A673 (cell line): ENCODE measurements at regions of chr3 and their contacts with region 1.

Region 1: DNA sequence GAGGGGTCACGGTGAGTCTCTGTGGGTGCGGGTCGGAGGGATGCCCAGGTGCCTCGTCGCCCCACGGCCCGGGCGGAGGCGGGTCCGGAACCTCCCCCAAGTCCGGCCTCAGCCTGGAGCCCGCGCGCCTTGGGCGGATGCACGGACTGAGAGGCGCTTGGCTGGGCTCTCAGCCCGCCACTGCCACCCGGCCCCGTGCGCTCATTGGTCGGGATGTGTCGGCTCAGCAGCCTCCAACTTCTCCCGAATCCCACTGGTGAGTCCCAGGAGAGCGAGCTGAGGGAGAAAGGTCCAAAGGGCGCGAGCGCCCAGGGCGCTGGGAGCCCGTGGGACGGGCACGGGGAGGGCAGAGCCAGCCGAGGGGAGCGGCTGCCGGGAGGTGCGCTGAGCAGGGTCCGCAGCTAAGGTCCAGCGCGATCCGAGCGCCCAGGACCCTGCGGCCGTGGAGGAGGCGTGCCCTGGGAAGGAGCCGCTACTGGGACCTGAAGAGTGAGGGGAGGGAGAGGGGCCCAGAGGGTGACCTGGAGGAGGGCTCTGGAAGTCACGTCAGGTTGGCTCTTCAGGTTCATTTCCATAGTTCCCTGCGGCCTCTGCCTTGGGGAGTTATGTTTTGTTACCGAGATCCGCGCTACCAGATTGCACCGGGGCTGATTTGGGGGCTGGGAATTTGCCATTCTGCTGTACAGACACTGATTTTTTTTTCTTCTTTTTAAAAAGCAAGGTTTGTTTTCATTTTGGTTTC is at the start of gene MME:
- DNase-seq: peak; percentile 7
- H3K4me3 ChIP-seq: peak within 1 kb of the TSS; percentile 33
- H3K27ac ChIP-seq: no peak within 1 kb of the TSS
- H3K4me1 ChIP-seq: peaks cover 4% of the 10 kb centered on the region
- H3K27me3 ChIP-seq: peaks cover 83% of the 10 kb centered on the region
- CTCF ChIP-seq: no peak
- total RNA-seq, gene MME: not detected in 2 replicates

Region 2: DNA sequence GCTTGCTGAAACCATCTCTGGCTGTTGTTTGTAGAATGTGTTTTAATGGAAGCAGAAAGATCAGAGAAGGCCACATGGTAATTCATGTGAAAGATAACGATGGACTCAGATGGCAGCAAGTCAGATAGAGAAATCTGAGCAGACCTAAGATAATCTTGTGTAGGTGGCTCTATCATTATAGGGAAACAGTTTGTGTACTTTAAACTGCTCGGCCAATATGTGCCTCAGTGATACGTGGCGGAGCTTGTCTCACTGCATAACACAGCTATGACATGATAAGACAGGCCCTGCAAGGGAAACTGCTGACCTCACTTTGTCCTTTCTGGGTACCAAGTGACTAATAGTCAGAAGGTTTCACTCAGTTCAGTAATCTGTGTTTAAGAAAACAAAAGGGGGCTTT is 51.2 kb after region 1 on chr3:
- CTCF ChIA-PET with region 1: no interaction called
- POLR2A ChIA-PET with region 1: no interaction called
- intact Hi-C with region 1: no loop called
- DNase-seq: no peak
- H3K4me3 ChIP-seq: no peak overlapping the region
- H3K27ac ChIP-seq: no peak overlapping the region
- H3K4me1 ChIP-seq: no peaks in the 10 kb centered on the region
- H3K27me3 ChIP-seq: no peaks in the 10 kb centered on the region
- CTCF ChIP-seq: no peak

Region 3: DNA sequence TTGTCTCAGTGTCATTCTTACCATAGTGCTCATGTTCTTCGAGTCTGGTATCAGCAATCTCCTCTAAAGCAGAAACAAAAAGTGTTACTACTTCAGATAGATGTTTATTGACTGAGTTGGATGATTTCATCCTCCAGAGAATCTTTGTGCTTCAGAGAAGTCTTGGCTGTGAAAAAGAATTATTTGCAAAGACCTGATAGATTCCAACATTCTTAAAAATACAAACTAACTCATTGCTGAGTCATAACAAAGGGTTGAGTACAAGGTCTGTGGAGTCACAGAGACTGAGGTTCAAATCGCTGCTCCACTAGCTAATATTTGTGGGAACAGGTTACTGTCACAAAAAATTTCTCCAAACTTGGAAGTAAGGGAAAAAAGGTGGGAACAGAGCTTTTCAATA is 222.6 kb after region 1 on chr3:
- CTCF ChIA-PET with region 1: no interaction called
- POLR2A ChIA-PET with region 1: no interaction called
- intact Hi-C with region 1: loop called (anchors 10 kb)
- DNase-seq: no peak
- H3K4me3 ChIP-seq: no peak overlapping the region
- H3K27ac ChIP-seq: no peak overlapping the region
- H3K4me1 ChIP-seq: no peaks in the 10 kb centered on the region
- H3K27me3 ChIP-seq: no peaks in the 10 kb centered on the region
- CTCF ChIP-seq: no peak

Region 4: DNA sequence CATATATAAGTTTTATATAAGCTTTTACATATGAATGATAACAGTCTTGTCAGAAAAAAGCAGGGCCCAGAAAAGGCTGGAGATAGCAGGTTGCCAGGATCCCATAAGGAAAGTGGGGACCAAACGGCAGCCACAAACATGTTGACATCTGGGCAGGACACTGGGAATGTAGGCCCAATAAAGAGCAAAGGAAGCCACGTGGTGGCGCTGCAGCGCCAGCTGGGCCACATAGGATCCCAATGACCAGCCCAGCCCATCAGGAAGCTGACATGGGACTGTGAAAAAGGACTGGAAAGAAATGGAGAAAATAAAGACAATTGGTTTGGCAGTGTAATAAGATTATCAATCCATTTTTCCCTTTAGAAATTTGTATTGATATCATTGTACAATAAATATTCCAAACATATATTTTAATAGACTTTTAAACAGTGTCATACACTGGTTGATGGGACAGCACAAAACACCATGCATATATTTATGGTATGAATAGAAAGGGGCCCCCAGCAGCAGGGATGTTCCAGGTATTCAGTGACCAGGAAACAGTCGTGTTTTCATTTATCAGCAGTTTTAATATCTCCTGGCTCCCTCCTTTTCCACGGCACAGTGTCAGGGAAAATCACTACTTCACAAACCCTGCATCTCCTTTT is 302.6 kb after region 1 on chr3:
- CTCF ChIA-PET with region 1: no interaction called
- POLR2A ChIA-PET with region 1: no interaction called
- intact Hi-C with region 1: no loop called
- DNase-seq: peak; percentile 80
- H3K4me3 ChIP-seq: no peak overlapping the region
- H3K27ac ChIP-seq: no peak overlapping the region
- H3K4me1 ChIP-seq: no peaks in the 10 kb centered on the region
- H3K27me3 ChIP-seq: no peaks in the 10 kb centered on the region
- CTCF ChIP-seq: peak; percentile 92